ENCODE measurements at regions of chr2 and their contacts with region 1.

Region 1: GRCh38 chr2:63841254-63842022 is at the start of gene UGP2:
- DNase-seq: peak; percentile 79 to 91 (median 82)
- ATAC-seq: peak; percentile 64 to 67
- H3K4me3 Mint-ChIP-seq: peak within 1 kb of the TSS; percentile 94 to 100 (median 98)
- H3K27ac Mint-ChIP-seq: peak within 1 kb of the TSS; percentile 95 to 99 (median 99)
- H3K4me1 Mint-ChIP-seq: peaks cover 20 to 57% (median 49%) of the 10 kb centered on the region in 4 donors
- H3K27me3 Mint-ChIP-seq: no peaks in the 10 kb centered on the region
- polyA plus RNA-seq, gene UGP2: 112 to 148 (median 135) TPM

Region 2: DNA sequence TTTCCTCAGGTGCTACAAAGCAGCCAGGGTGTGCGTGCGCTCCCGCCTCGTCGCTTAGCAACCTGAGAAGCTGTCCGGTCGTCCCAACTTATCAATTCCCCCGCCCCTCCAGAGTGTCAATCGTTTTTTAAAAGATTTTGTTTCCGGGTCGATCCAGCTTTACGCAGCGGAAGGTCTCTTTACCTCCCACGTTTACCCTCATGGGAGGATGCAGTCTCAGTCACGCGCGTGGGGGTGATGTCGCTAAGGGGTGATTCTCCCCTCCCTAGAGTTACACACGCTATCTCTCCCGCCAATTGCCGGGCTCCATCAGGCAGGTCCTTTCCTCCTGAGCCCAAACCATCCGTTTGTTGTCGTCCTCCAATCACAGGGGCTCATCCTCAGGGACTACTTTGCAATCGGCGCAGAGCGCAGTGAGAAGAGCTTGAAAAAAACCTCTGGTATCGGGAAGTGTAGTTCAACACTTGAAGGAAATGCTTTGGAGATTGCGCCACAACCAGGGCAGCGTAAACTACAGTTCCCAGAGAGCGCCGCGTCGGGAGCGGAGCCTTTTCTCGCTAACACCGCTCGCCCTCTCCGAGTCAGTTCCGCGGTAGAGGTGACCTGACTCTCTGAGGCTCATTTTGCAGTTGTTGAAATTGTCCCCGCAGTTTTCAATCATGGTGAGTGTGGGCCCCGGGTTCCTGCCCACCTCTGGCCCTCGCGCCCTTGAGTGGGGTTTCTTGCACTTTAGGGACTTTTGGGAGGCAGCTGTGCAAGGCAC is 252.9 kb before region 1 on chr2 and contains the starts of genes MDH1 and WDPCP:
- POLR2A ChIA-PET with region 1: interaction called, 23 read pairs
- DNase-seq: peak; percentile 77 to 98 (median 94)
- ATAC-seq: peak; percentile 88
- H3K4me3 Mint-ChIP-seq: peak within 1 kb of the TSS; percentile 91 to 98 (median 94)
- H3K27ac Mint-ChIP-seq: peak within 1 kb of the TSS; percentile 93 to 99 (median 96)
- H3K4me1 Mint-ChIP-seq: peaks cover 22 to 53% (median 47%) of the 10 kb centered on the region in 4 donors
- H3K27me3 Mint-ChIP-seq: no peaks in the 10 kb centered on the region
- polyA plus RNA-seq, gene MDH1: 242 to 284 (median 249) TPM
- polyA plus RNA-seq, gene WDPCP: 3.5 to 7.9 (median 5.8) TPM

Region 3: DNA sequence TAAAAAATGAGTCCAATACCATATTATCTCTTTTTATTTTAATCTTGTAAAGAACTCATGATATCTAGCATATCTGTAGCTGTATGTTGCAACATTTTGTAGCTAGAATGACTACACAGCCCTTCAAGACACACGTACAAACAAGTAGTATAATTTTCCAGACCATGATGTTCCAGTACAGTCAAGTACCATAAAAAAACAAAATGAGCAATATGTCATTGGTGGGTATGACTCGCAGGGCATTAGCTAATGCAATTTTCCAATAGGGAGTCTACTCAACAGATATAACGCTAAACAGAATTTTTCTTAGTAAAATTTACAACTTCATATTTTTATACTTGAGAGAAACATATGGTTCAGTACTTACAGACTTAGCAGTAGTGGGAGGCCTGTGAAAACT is 53.4 kb before region 1 on chr2:
- POLR2A ChIA-PET with region 1: no interaction called
- DNase-seq: no peak
- ATAC-seq: no peak
- H3K4me3 Mint-ChIP-seq: no peak overlapping the region
- H3K27ac Mint-ChIP-seq: no peak overlapping the region
- H3K4me1 Mint-ChIP-seq: peaks cover 0 to 6% (median 2%) of the 10 kb centered on the region in 4 donors
- H3K27me3 Mint-ChIP-seq: no peaks in the 10 kb centered on the region

Region 4: DNA sequence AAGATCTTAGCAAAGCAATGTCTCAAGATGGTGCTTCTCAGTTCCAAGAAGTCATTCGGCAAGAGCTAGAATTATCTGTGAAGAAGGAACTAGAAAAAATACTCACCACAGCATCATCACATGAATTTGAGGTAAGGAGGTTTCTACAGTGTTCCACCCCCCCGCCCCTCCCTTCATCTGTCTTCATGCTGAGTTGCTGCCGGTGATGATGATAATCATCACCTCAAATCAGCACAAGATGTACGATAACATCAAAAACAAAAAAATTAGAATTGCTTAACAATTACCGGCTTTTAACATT is 14.8 kb after region 1 on chr2:
- POLR2A ChIA-PET with region 1: interaction called, 40 read pairs
- DNase-seq: peak in 9 of 10 donors; percentile 17 to 84 (median 60)
- ATAC-seq: peak; percentile 89 to 92
- H3K4me3 Mint-ChIP-seq: peak overlapping the region; percentile 55 to 82 (median 70)
- H3K27ac Mint-ChIP-seq: peak overlapping the region; percentile 86 to 98 (median 95)
- H3K4me1 Mint-ChIP-seq: peaks cover 26 to 68% (median 63%) of the 10 kb centered on the region in 4 donors
- H3K27me3 Mint-ChIP-seq: no peaks in the 10 kb centered on the region

Region 5: DNA sequence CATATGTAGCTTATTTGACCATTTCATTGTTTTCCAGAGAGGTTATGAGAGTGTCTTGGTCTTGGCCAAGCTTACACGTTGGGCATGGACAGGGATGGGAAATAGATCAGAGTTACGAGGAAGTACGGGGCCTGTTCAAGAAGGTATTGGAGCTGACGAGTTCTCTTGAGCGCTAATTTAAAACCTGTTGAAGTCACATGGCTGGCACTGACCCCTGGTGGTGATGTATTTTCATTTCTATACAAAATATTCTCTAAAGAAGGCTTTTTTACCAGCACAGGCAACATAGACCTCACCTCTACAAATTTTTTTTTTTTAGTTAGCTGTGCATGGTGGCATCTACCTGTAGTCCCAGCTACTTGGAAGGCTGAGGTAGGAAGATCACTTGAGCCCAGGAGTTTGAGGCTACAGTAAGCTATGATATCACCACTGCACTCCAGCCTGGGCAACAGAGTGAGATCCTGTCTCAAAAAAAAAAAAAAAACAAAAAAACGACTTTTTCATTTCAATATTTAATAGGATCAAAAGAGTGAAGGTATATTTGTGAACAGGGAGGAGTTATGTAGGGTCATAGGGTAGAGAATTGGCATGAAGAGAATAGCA is 19.9 kb after region 1 on chr2:
- POLR2A ChIA-PET with region 1: interaction called, 40 read pairs
- DNase-seq: peak; percentile 24 to 78 (median 68)
- ATAC-seq: peak; percentile 56 to 76
- H3K4me3 Mint-ChIP-seq: no peak overlapping the region
- H3K27ac Mint-ChIP-seq: peak overlapping the region in 8 of 10 donors; percentile 20 to 85 (median 51)
- H3K4me1 Mint-ChIP-seq: peaks cover 15 to 45% (median 31%) of the 10 kb centered on the region in 4 donors
- H3K27me3 Mint-ChIP-seq: no peaks in the 10 kb centered on the region

Region 6: GRCh38 chr2:64017811-64018672 is 176.6 kb after region 1 on chr2:
- POLR2A ChIA-PET with region 1: interaction called, 15 read pairs
- DNase-seq: peak in 1 of 10 donors; percentile 7
- ATAC-seq: no peak
- H3K4me3 Mint-ChIP-seq: peak overlapping the region; percentile 96 to 99 (median 98)
- H3K27ac Mint-ChIP-seq: peak overlapping the region; percentile 96 to 99 (median 96)
- H3K4me1 Mint-ChIP-seq: peaks cover 25 to 62% (median 46%) of the 10 kb centered on the region in 4 donors
- H3K27me3 Mint-ChIP-seq: no peaks in the 10 kb centered on the region

Measured in naive thymus-derived CD8-positive, alpha-beta T cell (primary cell).